HEK293T (cell line): ENCODE measurements at regions of chr6 and their contacts with region 1.

Region 1: DNA sequence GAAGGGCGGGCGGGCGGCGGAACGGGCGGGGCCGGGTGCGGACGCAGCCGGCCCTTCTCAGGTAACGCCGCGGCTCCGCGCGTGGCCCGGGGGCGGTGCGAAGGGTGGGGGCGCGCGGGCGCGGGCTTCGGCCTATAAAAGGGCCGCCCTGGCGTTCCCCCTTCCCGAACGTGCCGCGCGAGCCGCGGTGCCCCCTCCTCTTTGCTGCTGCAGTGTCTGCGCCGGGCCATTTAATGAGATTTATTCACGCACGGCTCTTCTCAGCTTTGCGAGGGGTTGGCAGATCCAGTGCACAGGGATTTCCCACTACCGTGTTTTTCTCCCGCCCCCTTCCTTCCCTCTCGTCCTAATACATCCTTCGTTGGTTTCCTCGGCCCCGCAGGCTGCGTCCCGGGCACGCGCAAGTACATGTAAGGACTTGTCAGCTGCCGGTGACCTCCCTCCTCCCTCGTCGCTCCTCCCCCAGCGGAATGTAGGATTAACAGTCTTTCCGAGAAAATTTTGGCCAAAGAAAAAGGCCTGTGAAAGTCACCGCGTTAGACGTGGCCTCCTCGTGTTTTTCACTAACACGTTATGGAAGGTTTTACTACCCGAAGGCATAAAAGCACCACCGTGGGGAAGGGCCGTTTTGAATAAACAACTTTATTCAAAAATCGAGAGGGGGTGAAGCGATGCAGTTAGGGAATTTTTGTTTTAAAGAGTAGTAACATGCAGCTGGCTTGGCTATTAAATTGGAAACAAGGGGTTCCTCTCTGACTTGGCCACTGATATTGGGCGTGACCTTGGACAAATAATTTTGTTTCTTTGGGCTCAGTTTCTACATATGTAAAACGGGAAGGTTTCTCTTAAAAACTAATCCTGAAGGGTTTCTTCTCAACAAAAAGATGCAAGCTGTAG is 966 bp upstream of the REV3L start:
- DNase-seq: peak; percentile 89

Region 2: GRCh38 chr6:111551520-111552231 is 67.7 kb after region 1 on chr6:
- CTCF ChIA-PET with region 1: interaction called, 3 read pairs
- POLR2A ChIA-PET with region 1: interaction called, 29 read pairs
- DNase-seq: no peak

Region 3: GRCh38 chr6:111605100-111605751 is 121.2 kb after region 1 on chr6:
- CTCF ChIA-PET with region 1: interaction called, 3 read pairs
- POLR2A ChIA-PET with region 1: interaction called, 32 read pairs
- DNase-seq: peak; percentile 59

Region 4: GRCh38 chr6:112639391-112639831 is 1155.4 kb after region 1 on chr6:
- CTCF ChIA-PET with region 1: no interaction called
- POLR2A ChIA-PET with region 1: no interaction called
- DNase-seq: no peak